ENCODE measurements at regions of chr1 and their contacts with region 1.

Region 1: GRCh38 chr1:183471743-183472487 is 384 bp upstream of the SMG7 start:
- DNase-seq: peak; percentile 89
- ATAC-seq: peak; percentile 68
- H3K4me3 Mint-ChIP-seq: peak overlapping the region; percentile 97
- H3K27ac Mint-ChIP-seq: peak overlapping the region; percentile 100
- H3K4me1 Mint-ChIP-seq: peaks cover 36% of the 10 kb centered on the region
- H3K27me3 Mint-ChIP-seq: no peaks in the 10 kb centered on the region
- CTCF ChIP-seq: no peak

Region 2: DNA sequence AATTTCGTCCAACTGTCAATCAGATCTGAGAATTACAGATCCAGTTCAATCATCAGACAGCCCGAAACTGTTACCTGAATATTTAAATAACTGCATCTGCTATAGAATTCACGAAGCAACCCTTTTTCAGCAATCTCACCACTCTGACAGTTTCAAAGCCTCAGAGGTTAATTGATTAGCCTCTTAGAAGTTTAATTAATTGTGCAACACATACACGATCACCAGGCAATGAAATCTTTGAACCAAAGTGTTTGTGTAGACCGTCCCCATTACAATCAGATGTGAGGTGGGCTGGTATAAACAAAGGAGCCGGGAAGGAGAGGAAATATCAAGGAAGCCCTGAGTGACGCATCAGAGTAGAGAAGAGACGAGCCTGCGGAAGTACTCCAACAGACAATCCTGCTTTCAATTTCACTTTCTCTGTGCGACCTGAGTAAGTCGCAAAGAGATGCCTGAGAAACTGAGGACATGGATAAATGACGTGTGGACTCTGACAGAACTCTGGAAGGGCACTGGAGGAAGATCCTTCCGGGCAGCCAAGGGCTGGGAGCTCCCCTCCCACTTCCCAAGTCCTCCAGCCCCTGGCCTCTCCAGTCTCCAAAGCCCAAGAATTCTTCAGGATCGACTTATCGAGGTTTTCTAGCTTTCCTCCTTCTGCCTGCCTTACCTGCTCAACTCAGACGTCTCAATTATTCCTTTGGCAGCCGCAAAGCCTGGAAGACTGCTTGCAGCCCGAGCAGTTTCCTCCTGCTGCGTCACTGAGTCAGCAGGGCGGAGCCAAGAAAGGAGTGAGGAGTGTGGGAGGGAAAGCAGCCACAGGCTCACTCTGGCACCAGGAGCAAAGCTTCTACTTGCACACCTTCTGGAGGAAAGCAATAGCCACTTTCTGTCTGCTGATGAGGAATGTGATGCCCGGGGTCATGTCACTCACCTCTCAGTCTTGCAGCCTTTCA is 883.1 kb before region 1 on chr1 and contains the start of gene RNASEL:
- CTCF ChIA-PET with region 1: no interaction called
- POLR2A ChIA-PET with region 1: no interaction called
- intact Hi-C with region 1: loop called (anchors 5 kb)
- DNase-seq: peak; percentile 39
- ATAC-seq: peak; percentile 90
- H3K4me3 Mint-ChIP-seq: peak within 1 kb of the TSS; percentile 92
- H3K27ac Mint-ChIP-seq: peak within 1 kb of the TSS; percentile 96
- H3K4me1 Mint-ChIP-seq: peaks cover 52% of the 10 kb centered on the region
- H3K27me3 Mint-ChIP-seq: no peaks in the 10 kb centered on the region
- CTCF ChIP-seq: no peak
- total RNA-seq, gene RNASEL: 10.0 and 11.1 TPM in 2 replicates

Region 3: DNA sequence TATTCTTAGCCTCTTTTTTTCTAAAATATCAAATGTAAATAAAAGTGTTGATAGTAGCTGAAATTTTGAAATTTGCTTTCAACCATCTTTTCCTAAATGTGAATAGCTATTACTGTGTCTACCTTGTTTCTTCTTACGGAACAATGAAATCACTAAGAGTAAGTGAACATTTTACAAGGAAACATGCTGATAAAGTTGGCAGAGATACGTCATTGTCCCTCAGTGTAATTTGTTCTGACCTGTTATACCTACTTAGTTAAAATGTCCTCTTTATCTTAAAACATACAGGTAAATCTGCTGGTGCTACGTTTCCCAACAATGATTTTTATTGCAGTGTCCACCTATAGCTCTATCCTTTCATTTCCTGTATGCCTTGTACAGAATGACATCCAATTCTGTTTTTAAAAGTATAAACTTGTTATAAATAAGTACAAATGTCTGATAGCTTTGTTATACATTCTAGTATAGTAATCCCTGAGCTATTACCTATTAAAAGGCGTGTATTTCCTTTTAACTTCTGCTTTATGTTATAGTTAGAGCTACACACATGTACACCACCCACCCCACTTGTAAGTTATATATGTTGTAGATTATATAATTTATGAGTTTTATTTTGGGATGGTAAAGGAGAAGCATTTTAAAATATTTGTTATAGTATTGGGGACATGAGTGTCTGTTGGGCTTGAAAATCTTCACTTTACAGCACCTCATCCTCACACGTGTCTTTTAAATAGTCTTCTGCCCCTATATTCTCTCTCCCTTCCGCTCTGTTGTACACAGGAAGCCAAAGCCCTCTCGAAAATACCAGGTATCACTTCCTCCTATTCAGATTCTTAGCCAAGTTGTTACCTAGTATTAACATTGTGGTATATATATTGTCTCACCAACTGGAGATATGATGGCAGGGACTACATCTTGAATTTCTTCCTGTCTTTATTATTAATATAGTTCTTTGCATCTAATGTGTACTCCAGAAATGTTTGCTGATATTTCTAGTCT is 423.5 kb before region 1 on chr1:
- CTCF ChIA-PET with region 1: no interaction called
- POLR2A ChIA-PET with region 1: no interaction called
- intact Hi-C with region 1: loop called (anchors 5 kb)
- DNase-seq: no peak
- ATAC-seq: peak; percentile 98
- H3K4me3 Mint-ChIP-seq: peak overlapping the region; percentile 8
- H3K27ac Mint-ChIP-seq: peak overlapping the region; percentile 88
- H3K4me1 Mint-ChIP-seq: peaks cover 78% of the 10 kb centered on the region
- H3K27me3 Mint-ChIP-seq: no peaks in the 10 kb centered on the region
- CTCF ChIP-seq: no peak

Region 4: DNA sequence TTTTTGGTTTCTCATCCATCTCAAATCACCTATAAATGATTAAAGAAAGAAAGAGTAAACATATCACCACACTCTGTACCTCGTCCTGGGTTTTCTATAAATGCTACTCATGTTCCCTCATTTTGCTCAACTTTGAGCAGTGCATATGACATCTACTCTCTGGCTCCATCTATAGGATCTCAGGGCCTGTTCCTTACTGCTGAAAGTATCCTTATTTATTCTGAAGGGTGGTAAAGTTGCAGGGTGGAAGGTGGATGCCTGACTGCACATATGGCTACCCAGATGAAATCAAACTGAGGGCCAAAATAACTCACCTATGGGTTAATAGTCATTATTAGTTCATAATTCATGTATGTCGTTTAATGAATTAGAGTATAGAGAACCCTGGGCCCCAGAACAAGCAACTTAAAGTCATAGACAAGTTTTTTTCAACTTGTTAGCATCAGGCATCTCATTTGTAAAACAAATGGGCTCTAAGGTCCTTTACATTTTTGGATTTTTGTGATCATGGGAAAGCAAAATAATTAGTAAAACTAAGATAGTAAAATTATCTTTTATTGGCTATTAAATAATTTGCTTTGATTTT is 71.8 kb after region 1 on chr1:
- CTCF ChIA-PET with region 1: interaction called, 6 read pairs
- POLR2A ChIA-PET with region 1: interaction called, 8 read pairs
- intact Hi-C with region 1: loop called (anchors 1 kb)
- DNase-seq: no peak
- ATAC-seq: peak; percentile 71
- H3K4me3 Mint-ChIP-seq: no peak overlapping the region
- H3K27ac Mint-ChIP-seq: no peak overlapping the region
- H3K4me1 Mint-ChIP-seq: peaks cover 30% of the 10 kb centered on the region
- H3K27me3 Mint-ChIP-seq: no peaks in the 10 kb centered on the region
- CTCF ChIP-seq: no peak

Region 5: GRCh38 chr1:183622884-183623785 is 151.2 kb after region 1 on chr1:
- CTCF ChIA-PET with region 1: no interaction called
- POLR2A ChIA-PET with region 1: interaction called, 4 read pairs
- intact Hi-C with region 1: loop called (anchors 1 kb)
- DNase-seq: peak; percentile 20
- ATAC-seq: peak; percentile 94
- H3K4me3 Mint-ChIP-seq: no peak overlapping the region
- H3K27ac Mint-ChIP-seq: peak overlapping the region; percentile 50
- H3K4me1 Mint-ChIP-seq: peaks cover 26% of the 10 kb centered on the region
- H3K27me3 Mint-ChIP-seq: no peaks in the 10 kb centered on the region
- CTCF ChIP-seq: no peak

Region 6: DNA sequence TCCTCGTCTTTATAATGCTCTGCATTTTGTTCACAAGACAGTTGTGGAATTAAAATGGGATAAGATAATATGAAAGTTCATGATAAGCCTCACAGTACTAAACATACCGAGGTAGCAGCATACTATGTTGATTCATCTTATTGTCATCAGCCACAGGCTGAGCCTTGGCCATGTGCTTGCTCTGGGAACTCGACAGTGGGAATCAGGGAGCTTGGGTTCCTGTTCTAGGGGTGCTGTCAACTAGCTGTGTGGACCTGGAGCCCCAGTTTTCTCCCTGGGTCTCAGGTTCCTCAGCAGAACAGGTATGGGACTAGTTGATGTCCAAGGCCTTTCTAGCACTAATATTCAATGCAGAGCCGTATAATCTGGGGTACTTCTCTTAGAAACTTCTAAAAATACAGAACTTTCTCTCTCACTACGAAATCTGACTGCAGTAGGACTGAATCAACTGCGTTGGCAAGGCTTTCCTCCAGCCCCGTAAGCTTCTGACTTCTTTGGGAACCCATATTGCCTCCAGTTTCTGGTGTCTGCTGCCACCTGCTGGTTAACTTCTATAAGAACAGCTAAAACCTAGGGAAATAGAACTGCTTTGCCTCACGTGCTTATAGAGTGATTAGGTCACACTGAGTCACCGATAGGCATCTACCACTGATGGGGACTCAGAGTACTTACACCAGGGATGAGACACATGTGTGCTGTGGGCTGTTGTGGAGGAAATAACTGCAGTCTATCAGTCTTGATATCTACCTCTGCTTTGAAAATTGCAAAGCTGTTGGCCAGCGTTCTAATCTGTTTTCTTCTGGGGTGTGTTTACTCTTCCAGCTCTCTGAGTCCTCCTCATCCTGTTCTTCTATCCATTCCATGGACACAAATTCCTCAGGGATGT is 444.0 kb after region 1 on chr1:
- CTCF ChIA-PET with region 1: no interaction called
- POLR2A ChIA-PET with region 1: interaction called, 5 read pairs
- intact Hi-C with region 1: loop called (anchors 1 kb)
- DNase-seq: no peak
- ATAC-seq: peak; percentile 57
- H3K4me3 Mint-ChIP-seq: no peak overlapping the region
- H3K27ac Mint-ChIP-seq: peak overlapping the region; percentile 0
- H3K4me1 Mint-ChIP-seq: peaks cover 36% of the 10 kb centered on the region
- H3K27me3 Mint-ChIP-seq: no peaks in the 10 kb centered on the region
- CTCF ChIP-seq: peak; percentile 60